Activated T-helper 1 cell treated with anti-CD3 and anti-CD28 coated beads, Interleukin-12 subunit alpha, Interleukin-12 subunit beta, Interleukin-2, Interleukin-4 antibody, amounts not matched to agents 30 ng/mL and 10 ng/mL and 1 ng/mL, durations not matched to agents 14 hours and 24 hours and 36 hours (primary cell): ENCODE measurements at regions of chr2 and their contacts with region 1.

Region 1: DNA sequence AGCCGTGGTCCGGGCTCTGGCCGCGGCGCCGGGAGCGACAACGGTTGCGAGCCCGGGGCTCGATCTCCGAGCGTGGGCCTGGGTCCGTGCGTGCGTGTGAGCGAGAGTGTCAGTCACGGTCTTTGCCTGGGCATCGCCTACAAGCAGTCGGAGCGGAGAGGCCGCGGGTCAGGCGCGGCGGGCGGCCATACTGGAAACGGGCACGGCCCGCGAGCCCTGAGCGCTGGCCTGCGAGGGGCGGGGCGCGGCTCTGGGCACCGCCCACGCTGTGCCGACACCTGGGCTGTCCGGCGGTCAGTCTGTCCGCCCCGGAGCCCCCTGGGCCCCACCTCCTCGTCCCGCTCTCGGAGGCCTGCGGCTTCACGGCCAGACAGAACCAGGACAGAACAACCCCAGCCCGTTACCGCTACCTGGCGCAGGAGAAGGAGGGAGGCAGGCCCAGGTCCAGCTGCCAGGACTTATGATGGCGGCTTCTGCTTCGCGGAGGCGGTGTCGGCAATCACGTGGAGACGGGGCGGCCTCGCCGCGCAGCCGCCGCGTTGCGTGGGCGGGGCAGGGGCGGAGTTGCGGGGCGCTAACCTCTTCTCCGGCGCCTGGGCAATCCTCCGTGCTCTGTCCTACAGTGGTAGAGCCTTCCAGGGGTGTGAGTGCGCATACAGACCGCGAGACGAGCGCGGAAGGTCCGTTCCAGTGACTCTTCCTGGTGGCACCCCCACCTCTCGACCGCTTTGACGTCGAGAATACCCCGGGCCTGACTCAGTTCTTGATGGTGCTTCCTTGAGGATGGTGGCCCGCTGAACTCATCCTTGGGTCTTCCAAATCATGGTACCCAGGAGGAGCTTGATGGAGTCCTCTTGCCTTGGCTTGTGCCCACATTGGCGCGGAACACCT is at the start of gene TMEM131:
- DNase-seq: peak; percentile 94
- H3K4me3 Mint-ChIP-seq: peak within 1 kb of the TSS; percentile 97
- H3K27ac Mint-ChIP-seq: peak within 1 kb of the TSS; percentile 98
- H3K4me1 Mint-ChIP-seq: peaks cover 39% of the 10 kb centered on the region
- H3K27me3 Mint-ChIP-seq: peaks cover 4% of the 10 kb centered on the region
- total RNA-seq, gene TMEM131: 36.5 and 38.4 TPM in 2 replicates

Region 2: DNA sequence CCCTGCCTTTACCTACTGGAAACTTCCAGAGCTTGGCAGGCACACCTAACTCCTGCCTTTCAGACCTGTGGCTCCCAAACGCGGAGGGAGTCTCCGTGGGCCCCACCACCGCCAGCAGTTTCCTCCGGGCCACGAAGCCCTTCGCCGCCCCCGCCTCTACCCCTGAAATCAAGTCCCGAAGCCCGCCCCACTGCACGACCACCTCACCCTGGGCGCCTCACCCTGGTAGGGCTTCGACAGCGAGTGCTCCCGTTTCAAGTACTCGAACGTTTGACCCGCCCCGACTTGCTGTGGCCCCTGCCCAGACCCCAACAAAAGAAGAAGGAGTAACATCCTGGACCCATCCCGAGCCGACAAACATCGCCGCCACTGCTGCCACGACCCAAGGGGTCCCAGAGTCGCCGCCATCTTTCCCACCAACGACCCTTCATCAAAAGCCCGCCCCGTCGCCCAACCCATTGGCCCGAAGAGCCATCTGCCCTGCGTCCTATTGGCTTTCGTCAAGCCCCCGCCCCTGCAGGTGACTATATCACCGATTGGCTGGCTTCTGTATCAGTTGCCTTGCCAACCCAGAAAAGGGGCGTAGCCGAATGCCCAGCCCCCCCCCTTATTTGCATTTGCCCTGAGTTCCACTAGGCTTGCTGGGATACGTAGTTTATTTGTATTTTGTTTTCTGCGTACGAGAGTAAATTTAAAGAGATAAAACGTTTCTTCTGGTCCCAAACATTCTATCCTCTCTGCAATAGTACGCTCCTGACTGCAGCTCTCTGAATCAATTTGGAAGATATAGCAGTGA is 1256.1 kb before region 1 on chr2 and contains the start of gene LMAN2L:
- intact Hi-C with region 1: loop called (anchors 10 kb)
- DNase-seq: peak; percentile 94
- H3K4me3 Mint-ChIP-seq: peak within 1 kb of the TSS; percentile 90
- H3K27ac Mint-ChIP-seq: peak within 1 kb of the TSS; percentile 77
- H3K4me1 Mint-ChIP-seq: peaks cover 32% of the 10 kb centered on the region
- H3K27me3 Mint-ChIP-seq: no peaks in the 10 kb centered on the region
- total RNA-seq, gene LMAN2L: 5.6 and 6.0 TPM in 2 replicates

Region 3: GRCh38 chr2:97806738-97807618 is 189.0 kb before region 1 on chr2:
- intact Hi-C with region 1: loop called (anchors 1 kb)
- DNase-seq: peak; percentile 57
- H3K4me3 Mint-ChIP-seq: no peak overlapping the region
- H3K27ac Mint-ChIP-seq: no peak overlapping the region
- H3K4me1 Mint-ChIP-seq: no peaks in the 10 kb centered on the region
- H3K27me3 Mint-ChIP-seq: no peaks in the 10 kb centered on the region

Region 4: DNA sequence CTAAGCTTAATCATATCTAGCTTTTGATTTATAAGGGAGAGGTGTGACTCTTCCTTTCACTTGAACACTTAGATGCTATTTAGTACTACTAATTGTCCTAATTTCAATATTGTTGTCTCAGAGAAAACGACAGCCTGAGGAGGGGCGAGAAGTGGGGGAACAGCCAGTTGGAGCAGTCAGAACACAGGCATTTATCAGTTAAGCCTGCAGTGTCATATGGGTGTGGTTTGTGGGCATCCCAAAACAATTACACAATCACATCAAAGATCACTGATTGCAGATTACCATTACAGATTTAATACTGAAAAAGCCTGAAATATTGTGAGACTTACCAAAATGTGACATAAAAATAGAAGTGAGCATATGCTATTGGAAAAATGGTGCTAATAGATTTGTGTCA is 16.1 kb before region 1 on chr2:
- intact Hi-C with region 1: loop called (anchors 2 kb)
- DNase-seq: no peak
- H3K4me3 Mint-ChIP-seq: no peak overlapping the region
- H3K27ac Mint-ChIP-seq: no peak overlapping the region
- H3K4me1 Mint-ChIP-seq: peaks cover 13% of the 10 kb centered on the region
- H3K27me3 Mint-ChIP-seq: no peaks in the 10 kb centered on the region

Region 5: GRCh38 chr2:98134172-98135005 is 138.4 kb after region 1 on chr2:
- intact Hi-C with region 1: loop called (anchors 1 kb)
- DNase-seq: peak; percentile 36
- H3K4me3 Mint-ChIP-seq: peak overlapping the region; percentile 13
- H3K27ac Mint-ChIP-seq: peak overlapping the region; percentile 52
- H3K4me1 Mint-ChIP-seq: peaks cover 19% of the 10 kb centered on the region
- H3K27me3 Mint-ChIP-seq: peaks cover 9% of the 10 kb centered on the region

Region 6: DNA sequence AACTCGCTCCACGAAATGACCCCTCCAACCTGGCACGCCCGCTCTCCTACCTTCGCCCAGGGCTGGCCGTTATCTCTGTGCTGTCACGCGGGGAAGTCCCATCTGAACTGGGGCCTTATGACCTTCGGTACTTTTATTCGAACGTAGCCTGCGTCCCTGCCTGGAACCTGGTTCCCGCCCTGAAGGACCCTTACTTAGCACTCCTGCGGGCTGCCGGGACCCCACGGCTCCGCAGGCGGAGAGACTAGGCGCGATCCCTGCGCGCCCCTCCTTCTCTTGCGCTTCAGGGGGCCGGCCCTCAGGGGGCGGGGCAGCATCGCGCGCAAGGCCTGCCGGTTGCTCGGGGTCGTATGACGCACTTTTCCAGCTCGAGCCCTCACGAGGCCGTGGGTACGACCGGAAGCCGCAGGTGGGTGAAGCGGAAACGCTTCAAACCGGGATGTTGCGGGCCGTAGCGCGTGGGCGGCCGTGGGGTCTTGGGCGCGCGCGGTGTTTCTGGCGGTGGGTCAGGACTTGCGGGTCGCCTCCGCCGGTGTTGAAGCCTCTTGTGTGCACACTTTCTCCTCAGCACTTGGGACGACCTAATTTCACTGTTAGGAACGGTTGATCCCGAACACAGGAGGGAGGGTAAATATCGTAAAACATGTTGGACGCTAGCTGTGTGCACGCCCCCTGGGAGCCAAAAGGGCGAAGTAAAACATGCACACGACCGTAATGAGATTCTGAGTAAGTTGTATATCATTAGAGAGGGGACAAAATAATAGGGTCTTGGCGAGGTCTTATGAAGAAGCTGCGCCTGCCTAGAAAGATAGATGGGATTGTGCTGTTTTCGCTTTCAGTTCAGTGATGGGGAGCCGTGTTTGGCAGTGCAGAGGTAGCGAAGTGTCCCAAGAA is 1158.9 kb after region 1 on chr2 and contains the starts of genes LIPT1 and TSGA10:
- intact Hi-C with region 1: loop called (anchors 5 kb)
- DNase-seq: peak; percentile 92
- H3K4me3 Mint-ChIP-seq: no peak within 1 kb of the TSS
- H3K27ac Mint-ChIP-seq: peak within 1 kb of the TSS; percentile 95
- H3K4me1 Mint-ChIP-seq: peaks cover 31% of the 10 kb centered on the region
- H3K27me3 Mint-ChIP-seq: no peaks in the 10 kb centered on the region
- total RNA-seq, gene LIPT1: 2.2 and 3.3 TPM in 2 replicates
- total RNA-seq, gene TSGA10: 3.0 and 4.1 TPM in 2 replicates